B cell (primary cell): ENCODE measurements at regions of chr14 and their contacts with region 1.

Region 1: GRCh38 chr14:23095196-23096108 is at the start of gene C14orf119:
- DNase-seq: peak; percentile 100
- ATAC-seq: peak; percentile 86
- H3K4me3 ChIP-seq: peak within 1 kb of the TSS; percentile 76 to 99 (median 94)
- H3K4me3 Mint-ChIP-seq: no peak within 1 kb of the TSS
- H3K27ac ChIP-seq: peak within 1 kb of the TSS; percentile 92 to 97
- H3K27ac Mint-ChIP-seq: no peak within 1 kb of the TSS
- H3K4me1 ChIP-seq: peaks cover 20 to 24% of the 10 kb centered on the region in 2 donors
- H3K4me1 Mint-ChIP-seq: peaks cover 34% of the 10 kb centered on the region
- H3K27me3 ChIP-seq: no peaks in the 10 kb centered on the region
- H3K27me3 Mint-ChIP-seq: no peaks in the 10 kb centered on the region
- CTCF ChIP-seq: no peak
- total RNA-seq, gene C14orf119: 30.6 and 38.5 TPM in 2 replicates

Region 2: DNA sequence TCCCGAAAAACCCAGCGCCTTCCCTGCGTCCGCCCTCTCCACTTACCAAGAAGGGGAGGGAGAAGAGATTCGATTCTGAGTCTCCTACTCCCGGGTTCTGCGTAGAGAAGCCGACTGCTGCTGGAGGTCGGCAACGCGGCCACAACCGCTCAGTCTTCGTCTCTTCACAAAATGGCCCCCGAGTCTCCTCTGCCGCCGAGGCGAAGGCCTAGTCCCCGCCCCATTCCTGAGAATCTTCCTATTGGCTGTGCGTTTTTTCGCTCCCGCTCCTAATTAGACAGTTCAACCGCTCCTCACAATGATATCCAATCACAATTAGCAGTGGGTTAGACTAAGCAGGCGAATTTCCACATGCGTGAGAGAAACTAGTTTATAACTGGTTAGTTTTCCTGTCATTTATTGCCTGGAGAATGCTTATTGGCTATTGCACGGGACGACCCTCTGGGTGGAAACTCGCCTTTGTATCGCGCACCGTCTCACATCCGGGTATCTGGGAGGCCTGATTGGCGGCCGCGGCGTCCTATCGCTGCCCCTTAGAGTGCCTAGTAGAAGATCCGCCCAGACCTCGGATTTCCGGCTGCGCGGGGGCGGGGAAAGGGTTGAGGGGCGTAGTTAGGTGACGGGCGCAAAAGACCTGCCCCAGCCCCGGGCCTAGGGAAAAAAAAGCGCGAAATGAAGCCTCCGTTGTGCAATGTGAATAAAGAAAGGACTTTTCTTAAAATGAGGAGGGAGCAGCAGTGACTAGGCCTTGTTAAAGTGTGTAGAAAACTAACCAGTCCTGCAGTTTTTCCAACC is 1826.0 kb before region 1 on chr14 and contains the start of gene HNRNPC:
- CTCF ChIA-PET with region 1: no interaction called
- POLR2A ChIA-PET with region 1: no interaction called
- intact Hi-C with region 1: loop called (anchors 10 kb)
- DNase-seq: peak; percentile 100
- ATAC-seq: peak; percentile 83
- H3K4me3 ChIP-seq: peak within 1 kb of the TSS; percentile 67 to 100 (median 99)
- H3K4me3 Mint-ChIP-seq: peak within 1 kb of the TSS; percentile 98
- H3K27ac ChIP-seq: peak within 1 kb of the TSS; percentile 91 to 92
- H3K27ac Mint-ChIP-seq: peak within 1 kb of the TSS; percentile 99
- H3K4me1 ChIP-seq: peaks cover 37 to 48% of the 10 kb centered on the region in 2 donors
- H3K4me1 Mint-ChIP-seq: peaks cover 40% of the 10 kb centered on the region
- H3K27me3 ChIP-seq: no peaks in the 10 kb centered on the region
- H3K27me3 Mint-ChIP-seq: no peaks in the 10 kb centered on the region
- CTCF ChIP-seq: no peak
- total RNA-seq, gene HNRNPC: 496 and 497 TPM in 2 replicates

Region 3: GRCh38 chr14:23034483-23035302 is 60.8 kb before region 1 on chr14 and contains the start of gene PSMB5:
- CTCF ChIA-PET with region 1: no interaction called
- POLR2A ChIA-PET with region 1: no interaction called
- intact Hi-C with region 1: loop called (anchors 1 kb)
- DNase-seq: peak; percentile 96
- ATAC-seq: peak; percentile 92
- H3K4me3 ChIP-seq: peak within 1 kb of the TSS; percentile 62 to 100 (median 66)
- H3K4me3 Mint-ChIP-seq: peak within 1 kb of the TSS; percentile 86
- H3K27ac ChIP-seq: peak within 1 kb of the TSS; percentile 81 to 93
- H3K27ac Mint-ChIP-seq: peak within 1 kb of the TSS; percentile 93
- H3K4me1 ChIP-seq: peaks cover 14 to 20% of the 10 kb centered on the region in 2 donors
- H3K4me1 Mint-ChIP-seq: peaks cover 28% of the 10 kb centered on the region
- H3K27me3 ChIP-seq: no peaks in the 10 kb centered on the region
- H3K27me3 Mint-ChIP-seq: no peaks in the 10 kb centered on the region
- CTCF ChIP-seq: no peak
- total RNA-seq, gene PSMB5: 29.0 and 31.9 TPM in 2 replicates

Region 4: GRCh38 chr14:23076785-23077408 is 18.6 kb before region 1 on chr14:
- CTCF ChIA-PET with region 1: interaction called, 28 read pairs
- POLR2A ChIA-PET with region 1: no interaction called
- intact Hi-C with region 1: loop called (anchors 2 kb)
- DNase-seq: peak; percentile 62
- ATAC-seq: peak; percentile 66
- H3K4me3 ChIP-seq: no peak overlapping the region
- H3K4me3 Mint-ChIP-seq: no peak overlapping the region
- H3K27ac ChIP-seq: no peak overlapping the region
- H3K27ac Mint-ChIP-seq: no peak overlapping the region
- H3K4me1 ChIP-seq: peaks cover 2 to 4% of the 10 kb centered on the region in 2 donors
- H3K4me1 Mint-ChIP-seq: peaks cover 9% of the 10 kb centered on the region
- H3K27me3 ChIP-seq: no peaks in the 10 kb centered on the region
- H3K27me3 Mint-ChIP-seq: no peaks in the 10 kb centered on the region
- CTCF ChIP-seq: peak; percentile 83

Region 5: DNA sequence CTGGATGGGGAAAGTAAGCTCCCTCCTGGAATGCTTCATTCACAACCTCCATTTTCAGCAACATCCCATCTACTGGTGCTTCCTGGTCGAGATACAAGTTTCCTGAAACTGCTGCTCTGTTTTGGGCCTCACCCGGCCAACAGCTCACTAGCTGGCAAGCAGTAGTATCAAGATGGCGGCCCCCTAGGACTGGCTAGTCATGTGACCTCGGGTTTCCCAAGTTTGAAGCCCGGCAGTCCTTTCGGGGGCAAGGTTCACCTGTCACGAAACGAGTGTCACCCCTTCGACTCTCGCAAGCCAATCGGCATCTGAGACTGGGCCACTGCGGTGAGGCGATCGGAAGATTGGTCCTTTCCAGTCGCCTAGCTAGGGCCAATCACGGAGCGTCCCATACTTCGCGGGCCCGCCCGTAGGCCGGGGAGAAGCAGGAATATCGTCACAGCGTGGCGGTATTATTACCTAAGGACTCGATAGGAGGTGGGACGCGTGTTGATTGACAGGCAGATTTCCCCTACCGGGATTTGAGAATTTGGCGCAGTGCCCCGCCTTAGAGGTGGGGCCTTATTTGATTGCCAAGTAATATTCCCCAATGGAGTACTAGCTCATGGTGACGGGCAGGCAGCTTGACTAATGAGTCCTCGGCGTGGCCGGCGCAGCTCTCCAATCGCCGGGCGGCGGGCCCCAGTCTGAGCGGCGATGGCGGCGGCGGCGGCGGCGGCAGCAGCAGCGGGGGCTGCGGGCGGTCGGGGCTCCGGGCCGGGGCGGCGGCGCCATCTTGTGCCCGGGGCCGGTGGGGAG is 225.5 kb after region 1 on chr14 and contains the start of gene PABPN1:
- CTCF ChIA-PET with region 1: interaction called, 5 read pairs
- POLR2A ChIA-PET with region 1: interaction called, 10 read pairs
- intact Hi-C with region 1: loop called (anchors 1 kb)
- DNase-seq: peak; percentile 100
- ATAC-seq: peak; percentile 84
- H3K4me3 ChIP-seq: peak within 1 kb of the TSS; percentile 61 to 89 (median 79)
- H3K4me3 Mint-ChIP-seq: peak within 1 kb of the TSS; percentile 93
- H3K27ac ChIP-seq: peak within 1 kb of the TSS; percentile 91 to 99
- H3K27ac Mint-ChIP-seq: peak within 1 kb of the TSS; percentile 99
- H3K4me1 ChIP-seq: peaks cover 21 to 24% of the 10 kb centered on the region in 2 donors
- H3K4me1 Mint-ChIP-seq: peaks cover 33% of the 10 kb centered on the region
- H3K27me3 ChIP-seq: no peaks in the 10 kb centered on the region
- H3K27me3 Mint-ChIP-seq: no peaks in the 10 kb centered on the region
- CTCF ChIP-seq: no peak
- total RNA-seq, gene PABPN1: 280 and 293 TPM in 2 replicates

Region 6: GRCh38 chr14:23454445-23454856 is 359.0 kb after region 1 on chr14:
- CTCF ChIA-PET with region 1: no interaction called
- POLR2A ChIA-PET with region 1: no interaction called
- intact Hi-C with region 1: no loop called
- DNase-seq: no peak
- ATAC-seq: no peak
- H3K4me3 ChIP-seq: no peak overlapping the region
- H3K4me3 Mint-ChIP-seq: no peak overlapping the region
- H3K27ac ChIP-seq: no peak overlapping the region
- H3K27ac Mint-ChIP-seq: no peak overlapping the region
- H3K4me1 ChIP-seq: no peaks in the 10 kb centered on the region
- H3K4me1 Mint-ChIP-seq: no peaks in the 10 kb centered on the region
- H3K27me3 ChIP-seq: peaks cover 0 to 27% (median 9%) of the 10 kb centered on the region in 4 experiments
- H3K27me3 Mint-ChIP-seq: peaks cover 54% of the 10 kb centered on the region
- CTCF ChIP-seq: no peak

Region 7: DNA sequence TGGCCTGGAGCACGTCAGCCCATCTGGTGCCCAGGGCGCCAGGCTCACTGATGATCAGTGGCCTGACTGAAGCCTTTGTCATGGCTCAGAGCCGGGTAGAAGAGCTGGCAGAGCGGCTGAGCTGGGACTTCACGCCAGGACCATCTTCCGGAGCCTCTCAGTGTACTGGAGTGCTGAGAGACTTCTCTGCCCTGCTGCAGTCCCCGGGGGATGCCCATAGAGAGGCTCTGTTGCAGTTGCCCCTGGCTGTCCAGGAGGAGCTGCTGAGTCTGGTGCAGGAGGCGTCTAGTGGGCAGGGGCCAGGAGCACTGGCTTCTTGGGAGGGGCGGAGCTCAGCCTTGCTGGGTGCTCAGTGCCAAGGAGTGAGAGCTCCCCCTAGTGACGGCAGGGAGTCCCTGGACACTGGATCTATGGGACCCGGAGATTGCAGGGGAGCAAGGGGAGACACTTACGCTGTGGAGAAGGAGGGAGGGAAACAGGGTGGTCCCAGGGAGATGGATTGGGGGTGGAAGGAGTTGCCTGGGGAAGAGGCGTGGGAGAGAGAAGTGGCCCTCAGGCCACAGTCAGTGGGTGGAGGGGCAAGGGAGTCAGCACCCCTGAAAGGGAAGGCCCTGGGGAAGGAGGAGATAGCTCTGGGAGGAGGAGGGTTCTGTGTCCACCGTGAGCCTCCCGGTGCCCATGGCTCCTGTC is 1336.3 kb after region 1 on chr14:
- CTCF ChIA-PET with region 1: no interaction called
- POLR2A ChIA-PET with region 1: no interaction called
- intact Hi-C with region 1: loop called (anchors 10 kb)
- DNase-seq: peak; percentile 90
- ATAC-seq: peak; percentile 41
- H3K4me3 ChIP-seq: peak overlapping the region in 4 of 5 experiments; percentile 77 to 98 (median 93)
- H3K4me3 Mint-ChIP-seq: peak overlapping the region; percentile 94
- H3K27ac ChIP-seq: peak overlapping the region; percentile 98 to 99
- H3K27ac Mint-ChIP-seq: peak overlapping the region; percentile 98
- H3K4me1 ChIP-seq: peaks cover 32 to 43% of the 10 kb centered on the region in 2 donors
- H3K4me1 Mint-ChIP-seq: peaks cover 50% of the 10 kb centered on the region
- H3K27me3 ChIP-seq: no peaks in the 10 kb centered on the region
- H3K27me3 Mint-ChIP-seq: no peaks in the 10 kb centered on the region
- CTCF ChIP-seq: peak; percentile 87